IMR-90 (cell line): ENCODE measurements at regions of chr3 and their contacts with region 1.

Region 1: DNA sequence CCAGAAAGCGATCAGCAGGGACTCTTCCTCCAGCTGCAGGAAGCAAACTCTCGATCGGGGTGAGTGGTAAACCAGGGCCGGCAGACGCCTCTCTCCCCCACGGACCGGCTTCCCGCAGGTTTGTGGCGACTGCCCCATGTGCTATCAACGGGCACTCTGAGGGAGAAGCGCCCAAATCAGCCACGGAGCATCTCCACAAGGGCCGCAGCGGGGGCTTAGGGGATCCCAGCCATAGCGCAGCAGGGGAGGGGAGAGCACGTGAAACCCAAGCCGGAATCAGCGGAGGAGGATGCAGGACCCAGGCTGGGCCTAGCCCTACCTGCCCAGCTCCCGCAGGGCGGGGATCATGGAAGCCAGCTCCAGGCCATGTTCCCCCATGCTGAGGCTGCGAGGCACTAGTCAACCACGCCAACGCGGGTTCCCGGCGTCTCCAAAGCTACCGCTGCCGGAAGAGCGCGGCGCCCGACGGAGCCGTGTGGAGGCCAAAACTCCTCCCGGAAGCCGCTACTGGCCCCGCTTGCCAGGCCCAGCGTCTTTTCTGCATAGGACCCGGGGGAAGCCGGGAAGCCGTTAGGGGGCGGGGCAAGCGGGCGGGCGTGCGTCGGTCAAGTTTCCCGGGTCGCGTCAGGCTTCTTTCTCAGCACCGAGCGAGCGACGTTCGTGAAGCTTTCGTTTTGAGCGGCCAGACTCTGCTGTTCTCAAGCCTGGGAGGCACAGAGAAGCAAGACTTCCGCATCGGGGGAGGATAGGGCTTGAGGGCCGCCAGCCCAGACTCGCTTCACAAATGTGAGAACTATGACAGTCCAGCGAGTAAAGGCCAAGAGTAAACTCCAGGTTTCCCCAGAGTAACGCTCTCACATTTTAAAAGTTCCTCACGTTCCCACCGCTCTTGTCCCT is at the start of gene ATR:
- DNase-seq: peak; percentile 93
- ATAC-seq: peak; percentile 98
- H3K4me3 ChIP-seq: peak within 1 kb of the TSS; percentile 85
- H3K27ac ChIP-seq: peak within 1 kb of the TSS; percentile 88
- H3K4me1 ChIP-seq: no peaks in the 10 kb centered on the region
- H3K27me3 ChIP-seq: peaks cover 2% of the 10 kb centered on the region; the same call in 1 of the 2 replicates
- CTCF ChIP-seq: no peak
- POLR2A ChIP-seq: peak; percentile 86
- RAD21 ChIP-seq: no peak
- total RNA-seq, gene ATR: 28.0 and 36.7 TPM in 2 replicates

Region 2: DNA sequence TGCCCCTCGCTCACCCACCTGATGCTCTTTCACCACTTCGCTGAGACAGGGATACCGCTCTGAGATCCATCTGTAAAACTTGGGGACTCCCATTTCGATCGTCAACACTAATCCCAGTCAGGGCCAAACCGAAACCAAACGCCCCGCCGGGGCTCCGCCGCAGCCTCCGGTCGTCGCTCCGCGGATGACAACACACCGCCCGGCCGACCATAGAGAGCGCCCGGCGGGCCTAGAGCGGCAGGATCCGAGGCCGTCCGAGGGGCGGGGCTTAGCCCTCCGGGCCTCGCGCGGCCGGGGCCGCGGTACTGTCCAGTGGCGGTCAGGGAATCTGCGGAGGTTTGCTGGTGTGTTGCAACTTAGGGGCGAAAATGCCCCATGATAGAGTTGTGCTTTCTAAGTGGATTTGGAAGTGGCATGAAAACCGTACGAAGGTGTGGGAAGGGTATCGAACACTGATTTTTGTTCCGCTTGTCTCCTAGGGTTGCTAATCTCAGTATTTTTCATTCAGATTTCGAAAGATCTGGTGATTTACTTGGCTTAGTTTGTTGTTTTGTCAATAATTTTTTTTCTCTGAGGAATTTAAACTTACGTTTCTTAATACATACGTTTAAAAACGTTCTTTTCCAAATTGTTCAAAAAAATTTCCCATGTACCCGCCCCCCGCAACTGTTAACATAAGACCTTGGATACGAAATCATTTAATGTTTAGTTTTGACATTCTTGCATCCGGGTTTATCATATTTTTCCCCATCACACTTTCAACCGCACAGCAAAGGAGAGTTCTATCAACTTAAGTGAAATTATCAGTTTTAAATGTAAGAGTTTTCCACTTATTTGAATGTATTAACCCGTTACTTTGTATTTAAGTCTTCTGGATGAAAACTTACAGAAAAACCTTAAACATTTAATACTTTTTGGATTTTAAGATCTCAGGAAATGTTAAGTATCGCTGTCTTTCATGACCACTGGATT is 130.4 kb before region 1 on chr3 and contains the start of gene XRN1:
- CTCF ChIA-PET with region 1: no interaction called
- POLR2A ChIA-PET with region 1: no interaction called
- dilution Hi-C with region 1: no loop called
- in situ Hi-C with region 1: no loop called
- intact Hi-C with region 1: loop called (anchors 2 kb)
- DNase-seq: peak; percentile 94
- ATAC-seq: peak; percentile 100
- H3K4me3 ChIP-seq: peak within 1 kb of the TSS; percentile 94
- H3K27ac ChIP-seq: peak within 1 kb of the TSS; percentile 93
- H3K4me1 ChIP-seq: peaks cover 4% of the 10 kb centered on the region; the same call in 1 of the 2 replicates
- H3K27me3 ChIP-seq: no peaks in the 10 kb centered on the region
- CTCF ChIP-seq: no peak
- POLR2A ChIP-seq: peak; percentile 83
- RAD21 ChIP-seq: no peak
- total RNA-seq, gene XRN1: 21.5 and 38.9 TPM in 2 replicates

Region 3: GRCh38 chr3:143001369-143002082 is 423.0 kb after region 1 on chr3 and contains the start of gene U2SURP:
- CTCF ChIA-PET with region 1: no interaction called
- POLR2A ChIA-PET with region 1: no interaction called
- dilution Hi-C with region 1: no loop called
- in situ Hi-C with region 1: no loop called
- intact Hi-C with region 1: loop called (anchors 5 kb)
- DNase-seq: peak; percentile 98
- ATAC-seq: peak; percentile 95
- H3K4me3 ChIP-seq: peak within 1 kb of the TSS; percentile 76
- H3K27ac ChIP-seq: peak within 1 kb of the TSS; percentile 94
- H3K4me1 ChIP-seq: peaks cover 3% of the 10 kb centered on the region; the same call in 1 of the 2 replicates
- H3K27me3 ChIP-seq: no peaks in the 10 kb centered on the region
- CTCF ChIP-seq: no peak
- POLR2A ChIP-seq: peak; percentile 90
- RAD21 ChIP-seq: no peak
- total RNA-seq, gene U2SURP: 29.4 and 58.3 TPM in 2 replicates